ENCODE measurements at regions of chrX and their contacts with region 1.

Region 1: GRCh38 chrX:39859991-39860861 is 237.5 kb downstream of the BCOR start:
- DNase-seq: peak; percentile 81
- H3K4me3 Mint-ChIP-seq: peak overlapping the region; percentile 45
- H3K27ac Mint-ChIP-seq: peak overlapping the region; percentile 99
- H3K4me1 Mint-ChIP-seq: peaks cover 43% of the 10 kb centered on the region
- H3K27me3 Mint-ChIP-seq: no peaks in the 10 kb centered on the region

Region 2: GRCh38 chrX:39336671-39337311 is 523.4 kb before region 1 on chrX:
- intact Hi-C with region 1: loop called (anchors 10 kb)
- DNase-seq: peak; percentile 17
- H3K4me3 Mint-ChIP-seq: no peak overlapping the region
- H3K27ac Mint-ChIP-seq: peak overlapping the region; percentile 75
- H3K4me1 Mint-ChIP-seq: peaks cover 48% of the 10 kb centered on the region
- H3K27me3 Mint-ChIP-seq: no peaks in the 10 kb centered on the region

Region 3: GRCh38 chrX:39814391-39814790 is 45.8 kb before region 1 on chrX:
- intact Hi-C with region 1: loop called (anchors 1 kb)
- DNase-seq: peak; percentile 19
- H3K4me3 Mint-ChIP-seq: no peak overlapping the region
- H3K27ac Mint-ChIP-seq: no peak overlapping the region
- H3K4me1 Mint-ChIP-seq: peaks cover 33% of the 10 kb centered on the region
- H3K27me3 Mint-ChIP-seq: no peaks in the 10 kb centered on the region

Region 4: DNA sequence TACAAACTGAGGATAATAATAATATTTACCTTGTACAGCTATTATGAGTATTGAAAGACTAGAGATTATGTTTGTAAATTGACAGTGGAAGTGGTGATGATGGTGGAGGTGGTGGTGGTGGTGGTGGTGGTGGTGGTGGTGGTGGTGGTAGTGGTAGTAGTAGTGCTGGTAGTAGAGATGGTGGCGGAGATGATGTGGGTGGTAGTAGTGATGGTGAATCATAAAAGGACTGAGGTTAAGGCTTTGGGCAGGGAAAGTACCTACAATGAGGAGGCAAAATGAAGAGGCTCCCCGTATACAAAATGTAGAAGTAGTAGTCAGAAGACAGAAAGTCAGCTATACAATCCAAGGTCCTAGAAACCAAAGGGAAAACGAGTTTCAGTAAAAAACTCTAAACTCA is 23.4 kb after region 1 on chrX:
- intact Hi-C with region 1: loop called (anchors 1 kb)
- DNase-seq: no peak
- H3K4me3 Mint-ChIP-seq: peak overlapping the region; percentile 34
- H3K27ac Mint-ChIP-seq: peak overlapping the region; percentile 81
- H3K4me1 Mint-ChIP-seq: peaks cover 18% of the 10 kb centered on the region
- H3K27me3 Mint-ChIP-seq: no peaks in the 10 kb centered on the region

Region 5: GRCh38 chrX:40097497-40098263 is 237.5 kb after region 1 on chrX and contains the start of gene BCOR:
- intact Hi-C with region 1: loop called (anchors 5 kb)
- DNase-seq: peak; percentile 71
- H3K4me3 Mint-ChIP-seq: peak within 1 kb of the TSS; percentile 90
- H3K27ac Mint-ChIP-seq: peak within 1 kb of the TSS; percentile 95
- H3K4me1 Mint-ChIP-seq: peaks cover 28% of the 10 kb centered on the region
- H3K27me3 Mint-ChIP-seq: no peaks in the 10 kb centered on the region
- total RNA-seq, gene BCOR: 74.6 and 82.2 TPM in 2 replicates

Measured in activated T-helper 2 cell treated with anti-CD3 and anti-CD28 coated beads, Interferon-gamma antibody, Interleukin-2, Interleukin-4, amounts not matched to agents 10 μg/mL and 5 μg/mL and 100 μg/mL, durations not matched to agents 14 hours and 24 hours and 36 hours (primary cell).